Esophagus muscularis mucosa (tissue), 4 donors: ENCODE measurements at regions of chr1 and their contacts with region 1.

Region 1: DNA sequence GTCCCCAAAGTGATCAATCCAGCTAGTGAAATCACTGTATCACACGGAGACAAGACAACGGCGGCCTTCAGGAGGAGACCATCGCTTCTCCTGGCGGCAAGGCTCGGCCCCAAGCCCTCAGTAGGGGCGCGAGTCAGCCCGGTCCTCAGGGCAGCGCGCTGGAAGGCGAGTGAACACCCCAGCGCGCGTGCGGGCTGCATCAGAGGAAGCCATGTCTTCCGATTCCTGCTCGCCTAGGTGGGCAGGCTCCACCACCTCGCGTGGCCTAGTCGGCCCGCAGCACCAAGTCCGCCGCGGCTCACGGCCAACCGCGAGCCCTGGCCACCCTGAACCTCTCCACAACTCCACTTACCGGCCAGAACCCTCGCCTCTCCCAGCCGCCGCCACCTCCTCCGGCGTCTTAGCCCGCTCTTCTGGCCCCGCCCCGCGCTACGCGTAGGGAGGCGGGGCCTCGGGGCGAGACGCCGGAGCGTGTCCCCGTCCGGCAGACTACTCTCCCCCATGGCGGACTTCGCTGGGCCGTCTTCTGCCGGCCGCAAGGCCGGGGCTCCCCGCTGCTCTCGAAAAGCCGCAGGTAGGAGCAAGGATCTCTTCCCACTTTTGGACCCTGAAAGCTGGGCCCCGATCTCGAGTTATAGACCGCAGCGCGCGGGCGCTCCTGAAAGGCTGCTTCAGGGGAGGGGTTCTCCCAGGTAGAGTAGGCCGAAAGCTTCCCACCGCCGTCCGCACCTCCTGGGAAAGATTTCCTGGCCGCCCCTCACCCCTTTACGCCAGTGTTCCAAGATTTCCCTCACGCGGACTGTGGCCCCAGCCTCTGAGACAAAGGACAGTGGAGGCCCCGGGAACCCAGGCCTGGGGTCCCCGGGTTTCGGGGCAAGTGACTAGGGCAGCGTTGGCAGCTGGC is at the starts of genes GLMN and RPAP2:
- DNase-seq: peak; percentile 95
- H3K4me3 ChIP-seq: peak within 1 kb of the TSS; percentile 71 to 87 (median 76)
- H3K27ac ChIP-seq: peak within 1 kb of the TSS; percentile 87 to 93 (median 92)
- H3K4me1 ChIP-seq: peaks cover 0 to 33% (median 30%) of the 10 kb centered on the region in 4 donors
- H3K27me3 ChIP-seq: no peaks in the 10 kb centered on the region
- CTCF ChIP-seq: peak in 1 of 3 experiments; percentile 19
- EP300 ChIP-seq: no peak
- POLR2A ChIP-seq: peak; percentile 50
- total RNA-seq, gene GLMN: 6.0 to 9.1 (median 7.5) TPM
- total RNA-seq, gene RPAP2: 8.9 to 13.3 (median 12.8) TPM

Region 2: DNA sequence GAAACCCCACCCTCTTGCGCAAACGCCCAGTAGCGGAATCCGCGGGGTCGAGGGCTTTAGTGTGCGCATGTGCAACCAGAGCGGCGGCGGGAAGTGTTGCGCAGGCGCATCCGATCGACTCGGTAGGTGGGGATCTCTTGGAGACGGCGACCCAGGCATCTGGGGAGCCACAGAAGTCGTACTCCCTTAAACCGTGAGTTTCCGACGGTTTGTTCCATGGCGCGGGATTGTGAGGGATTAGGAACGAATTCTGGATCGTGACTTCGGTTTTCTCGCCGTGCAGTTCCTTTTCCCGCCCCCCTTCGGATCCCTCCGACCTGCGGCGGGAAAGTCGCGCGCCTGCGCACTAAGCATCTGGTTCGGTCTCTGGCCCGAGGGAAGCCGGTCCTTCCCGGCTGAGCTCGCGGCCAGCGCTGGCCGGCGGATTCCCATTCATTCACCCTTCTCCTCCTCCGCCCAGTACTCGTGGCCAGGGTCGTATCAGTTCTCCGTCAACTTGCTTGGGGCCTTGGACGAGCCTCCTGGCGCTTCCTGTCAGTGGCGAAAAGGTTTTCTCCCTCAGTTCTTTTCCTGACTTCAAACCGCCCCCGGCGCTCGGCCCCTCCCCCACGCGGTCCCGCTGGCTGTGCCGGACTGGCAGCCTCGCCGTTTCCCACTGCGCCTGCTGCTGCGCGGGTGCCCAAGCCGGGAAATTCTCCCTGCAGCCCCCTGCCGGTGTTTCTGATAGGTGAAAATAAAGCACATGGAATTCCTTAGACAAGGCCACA is 797.9 kb before region 1 on chr1 and contains the start of gene CDC7:
- intact Hi-C with region 1: loop called (anchors 10 kb)
- DNase-seq: peak; percentile 96
- H3K4me3 ChIP-seq: peak within 1 kb of the TSS; percentile 66 to 91 (median 72)
- H3K27ac ChIP-seq: peak within 1 kb of the TSS; percentile 76 to 93 (median 89)
- H3K4me1 ChIP-seq: peaks cover 17 to 19% (median 17%) of the 10 kb centered on the region in 4 donors
- H3K27me3 ChIP-seq: no peaks in the 10 kb centered on the region
- CTCF ChIP-seq: peak; percentile 3 to 30 (median 29)
- EP300 ChIP-seq: peak; percentile 52
- POLR2A ChIP-seq: peak; percentile 10
- total RNA-seq, gene CDC7: 0.71 to 2.8 (median 1.1) TPM

Region 3: GRCh38 chr1:91997607-91998195 is 301.1 kb before region 1 on chr1:
- intact Hi-C with region 1: loop called (anchors 5 kb)
- DNase-seq: no peak
- H3K4me3 ChIP-seq: no peak overlapping the region
- H3K27ac ChIP-seq: no peak overlapping the region
- H3K4me1 ChIP-seq: no peaks in the 10 kb centered on the region
- H3K27me3 ChIP-seq: no peaks in the 10 kb centered on the region
- CTCF ChIP-seq: peak; percentile 30 to 36 (median 32)
- EP300 ChIP-seq: no peak
- POLR2A ChIP-seq: no peak

Region 4: GRCh38 chr1:92485381-92486257 is 186.8 kb after region 1 on chr1:
- intact Hi-C with region 1: no loop called
- DNase-seq: no peak
- H3K4me3 ChIP-seq: peak overlapping the region; percentile 48 to 57 (median 54)
- H3K27ac ChIP-seq: peak overlapping the region in 2 of 4 donors; percentile 1 to 19
- H3K4me1 ChIP-seq: peaks cover 50 to 65% (median 64%) of the 10 kb centered on the region in 4 donors
- H3K27me3 ChIP-seq: peaks cover 20 to 86% (median 64%) of the 10 kb centered on the region in 4 donors
- CTCF ChIP-seq: peak in 1 of 3 experiments; percentile 11
- EP300 ChIP-seq: no peak
- POLR2A ChIP-seq: no peak

Region 5: DNA sequence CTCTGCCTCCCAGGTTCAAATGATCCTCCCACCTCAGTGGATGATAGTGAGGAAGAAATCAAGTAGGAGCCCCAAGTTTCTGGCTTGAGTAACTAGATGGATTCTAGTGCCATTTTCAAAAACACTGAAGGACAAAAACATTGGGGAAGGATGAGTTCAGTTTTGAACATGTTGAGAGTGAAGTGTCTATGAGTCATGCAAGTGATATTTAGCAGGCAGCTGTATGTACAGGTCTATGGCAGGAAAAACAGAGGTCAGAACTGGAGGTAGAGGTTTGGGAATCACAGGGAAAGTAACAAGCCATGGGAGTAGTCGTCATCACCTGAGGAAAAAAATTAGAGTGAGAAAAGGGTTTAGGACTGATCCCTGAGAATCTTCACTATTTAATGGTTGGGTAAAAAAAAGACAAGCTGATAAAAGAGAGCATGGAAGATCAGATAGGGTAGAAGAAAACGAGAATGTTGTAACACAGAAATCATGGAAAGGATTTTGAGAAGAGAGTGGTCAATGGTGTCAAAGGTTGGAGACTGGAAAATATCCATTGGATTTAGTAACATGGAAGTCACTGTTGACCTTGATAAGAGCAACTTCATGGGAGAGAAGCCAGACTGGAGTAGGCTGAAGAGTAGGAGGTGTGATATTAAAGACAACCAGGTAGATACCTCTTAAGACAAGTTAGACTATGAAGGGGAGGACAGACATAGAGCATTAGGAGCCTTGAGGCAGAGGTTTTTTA is 609.3 kb after region 1 on chr1:
- intact Hi-C with region 1: no loop called
- DNase-seq: no peak
- H3K4me3 ChIP-seq: no peak overlapping the region
- H3K27ac ChIP-seq: no peak overlapping the region
- H3K4me1 ChIP-seq: peaks cover 0 to 28% (median 13%) of the 10 kb centered on the region in 4 donors
- H3K27me3 ChIP-seq: no peaks in the 10 kb centered on the region
- CTCF ChIP-seq: no peak
- EP300 ChIP-seq: no peak
- POLR2A ChIP-seq: no peak